ENCODE measurements at regions of chr19 and their contacts with region 1.

Region 1: DNA sequence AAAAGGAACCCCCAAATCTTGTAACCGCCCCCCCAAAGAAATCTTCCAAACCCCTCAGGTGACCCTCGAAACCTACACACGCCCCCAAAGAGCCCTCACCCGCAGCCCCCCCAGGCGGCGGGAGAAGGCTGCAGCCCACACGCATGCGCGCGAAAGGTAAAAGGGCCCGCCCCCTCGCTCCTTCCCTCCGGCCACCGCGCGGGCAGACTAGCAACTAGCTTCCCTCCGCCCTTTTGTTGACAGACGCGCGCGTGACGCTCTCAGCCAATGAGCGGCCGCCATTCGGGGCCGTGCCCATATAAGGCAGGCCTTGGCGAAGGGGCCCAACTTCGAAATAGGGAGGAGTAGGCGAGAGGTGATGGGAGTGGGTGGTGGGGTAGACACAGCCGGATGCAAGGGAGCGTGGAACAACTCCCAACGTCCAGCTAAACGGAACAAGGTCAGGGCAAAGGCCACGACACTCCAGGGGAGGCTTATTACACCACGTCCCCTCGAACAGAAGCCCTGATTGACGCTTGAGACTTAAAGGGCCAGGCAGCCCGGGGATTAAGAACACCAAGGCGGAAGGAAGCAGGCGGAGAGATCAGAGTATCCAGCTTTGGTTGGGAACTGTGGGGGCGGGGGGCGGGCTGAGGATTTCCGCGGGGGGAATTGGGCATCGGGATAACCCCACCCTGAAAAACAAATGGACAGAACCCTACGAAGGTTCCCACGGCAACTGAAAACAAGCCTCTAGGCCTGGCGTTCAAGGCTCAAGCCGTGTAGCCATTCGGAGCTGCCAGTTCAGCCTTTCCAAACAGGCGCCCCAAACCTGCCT is 13.3 kb downstream of the FBXO46 start:
- DNase-seq: peak; percentile 99
- H3K4me3 Mint-ChIP-seq: peak overlapping the region; percentile 90
- H3K27ac Mint-ChIP-seq: peak overlapping the region; percentile 96
- H3K4me1 Mint-ChIP-seq: peaks cover 26% of the 10 kb centered on the region
- H3K27me3 Mint-ChIP-seq: no peaks in the 10 kb centered on the region
- CTCF ChIP-seq: no peak

Region 2: GRCh38 chr19:45657520-45658167 is 59.7 kb before region 1 on chr19:
- CTCF ChIA-PET with region 1: no interaction called
- intact Hi-C with region 1: no loop called
- DNase-seq: no peak
- H3K4me3 Mint-ChIP-seq: no peak overlapping the region
- H3K27ac Mint-ChIP-seq: no peak overlapping the region
- H3K4me1 Mint-ChIP-seq: peaks cover 8% of the 10 kb centered on the region
- H3K27me3 Mint-ChIP-seq: peaks cover 42% of the 10 kb centered on the region
- CTCF ChIP-seq: no peak

Region 3: GRCh38 chr19:45692187-45693105 is 24.9 kb before region 1 on chr19 and contains the start of gene QPCTL:
- CTCF ChIA-PET with region 1: interaction called, 29 read pairs
- intact Hi-C with region 1: no loop called
- DNase-seq: peak; percentile 99
- H3K4me3 Mint-ChIP-seq: peak within 1 kb of the TSS; percentile 82
- H3K27ac Mint-ChIP-seq: peak within 1 kb of the TSS; percentile 90
- H3K4me1 Mint-ChIP-seq: peaks cover 3% of the 10 kb centered on the region
- H3K27me3 Mint-ChIP-seq: no peaks in the 10 kb centered on the region
- CTCF ChIP-seq: no peak
- total RNA-seq, gene QPCTL: 20.4 and 20.7 TPM in 2 replicates

Region 4: DNA sequence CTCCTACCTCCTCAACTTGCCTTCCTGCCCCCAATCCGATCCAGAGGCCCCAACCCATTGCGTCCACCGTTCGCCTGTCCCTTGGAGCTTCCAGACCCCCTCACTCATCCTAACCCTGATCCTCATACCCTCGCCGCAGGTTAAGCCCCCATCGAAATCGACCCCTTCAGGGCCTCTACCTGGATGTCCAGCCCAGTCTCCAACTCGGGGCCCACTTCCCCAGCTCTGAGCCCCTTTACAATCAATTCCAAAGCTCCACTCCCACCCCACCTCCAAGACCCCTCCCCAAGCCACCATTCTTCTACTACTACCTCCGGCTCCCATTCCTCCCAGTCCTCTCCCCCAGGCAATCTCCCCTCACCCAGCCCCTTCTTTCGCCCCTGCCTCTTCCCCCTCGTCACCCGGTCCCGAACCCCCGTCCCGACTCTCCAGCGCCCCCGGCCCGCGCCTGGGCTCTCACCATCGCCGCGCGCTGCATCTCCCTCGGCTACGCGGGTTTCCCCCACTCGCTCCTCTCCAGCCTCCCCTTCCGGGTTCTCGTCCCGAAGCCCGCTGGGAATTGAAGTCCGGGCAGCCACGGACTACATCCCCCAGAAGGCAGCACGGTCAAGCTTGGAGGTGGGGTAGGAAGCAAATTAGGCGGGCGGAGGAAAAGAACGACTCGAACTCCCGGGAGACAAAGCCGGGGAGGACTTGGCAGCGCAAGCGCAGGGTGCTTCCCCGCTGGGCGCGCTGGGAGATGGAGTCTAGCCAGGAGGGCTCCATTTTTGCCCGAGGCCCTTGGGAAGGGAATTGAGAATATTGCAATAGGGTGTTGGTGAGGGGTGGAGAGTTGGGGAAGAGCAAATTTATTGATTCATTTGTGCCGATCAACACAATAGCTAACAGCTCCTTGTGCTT is 13.3 kb after region 1 on chr19 and contains the start of gene FBXO46:
- CTCF ChIA-PET with region 1: interaction called, 20 read pairs
- intact Hi-C with region 1: no loop called
- DNase-seq: peak; percentile 97
- H3K4me3 Mint-ChIP-seq: peak within 1 kb of the TSS; percentile 97
- H3K27ac Mint-ChIP-seq: peak within 1 kb of the TSS; percentile 83
- H3K4me1 Mint-ChIP-seq: peaks cover 26% of the 10 kb centered on the region
- H3K27me3 Mint-ChIP-seq: no peaks in the 10 kb centered on the region
- CTCF ChIP-seq: no peak
- total RNA-seq, gene FBXO46: 43.8 and 53.6 TPM in 2 replicates

Region 5: GRCh38 chr19:45834970-45835369 is 117.6 kb after region 1 on chr19:
- CTCF ChIA-PET with region 1: no interaction called
- intact Hi-C with region 1: no loop called
- DNase-seq: no peak
- H3K4me3 Mint-ChIP-seq: no peak overlapping the region
- H3K27ac Mint-ChIP-seq: no peak overlapping the region
- H3K4me1 Mint-ChIP-seq: peaks cover 9% of the 10 kb centered on the region
- H3K27me3 Mint-ChIP-seq: no peaks in the 10 kb centered on the region
- CTCF ChIP-seq: no peak

Region 6: DNA sequence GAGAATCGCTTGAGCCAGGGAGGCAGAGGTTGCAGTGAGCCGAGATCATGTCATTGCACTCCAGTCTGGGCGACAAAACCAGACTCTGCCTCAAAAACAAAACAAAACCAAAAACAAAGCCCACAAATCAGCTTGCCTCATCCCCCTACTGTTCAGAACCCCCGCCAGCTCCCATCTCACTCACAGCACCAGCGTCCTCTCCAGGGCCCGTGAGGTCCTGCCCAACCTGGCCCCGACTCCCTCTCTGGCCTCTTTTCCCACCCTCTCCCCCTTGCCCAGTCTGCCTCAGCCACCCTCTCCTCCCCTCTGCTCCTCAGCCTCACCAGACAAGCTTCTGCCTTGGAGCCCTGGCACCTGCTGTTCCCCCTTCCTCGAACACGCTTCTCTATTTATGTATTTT is 1750.5 kb after region 1 on chr19:
- CTCF ChIA-PET with region 1: interaction called, 11 read pairs
- intact Hi-C with region 1: no loop called
- DNase-seq: no peak
- H3K4me3 Mint-ChIP-seq: no peak overlapping the region
- H3K27ac Mint-ChIP-seq: no peak overlapping the region
- H3K4me1 Mint-ChIP-seq: peaks cover 9% of the 10 kb centered on the region
- H3K27me3 Mint-ChIP-seq: peaks cover 87% of the 10 kb centered on the region
- CTCF ChIP-seq: no peak

Measured in Calu3 (cell line).